MCF 10A (cell line): ENCODE measurements at regions of chr16 and their contacts with region 1.

Region 1: DNA sequence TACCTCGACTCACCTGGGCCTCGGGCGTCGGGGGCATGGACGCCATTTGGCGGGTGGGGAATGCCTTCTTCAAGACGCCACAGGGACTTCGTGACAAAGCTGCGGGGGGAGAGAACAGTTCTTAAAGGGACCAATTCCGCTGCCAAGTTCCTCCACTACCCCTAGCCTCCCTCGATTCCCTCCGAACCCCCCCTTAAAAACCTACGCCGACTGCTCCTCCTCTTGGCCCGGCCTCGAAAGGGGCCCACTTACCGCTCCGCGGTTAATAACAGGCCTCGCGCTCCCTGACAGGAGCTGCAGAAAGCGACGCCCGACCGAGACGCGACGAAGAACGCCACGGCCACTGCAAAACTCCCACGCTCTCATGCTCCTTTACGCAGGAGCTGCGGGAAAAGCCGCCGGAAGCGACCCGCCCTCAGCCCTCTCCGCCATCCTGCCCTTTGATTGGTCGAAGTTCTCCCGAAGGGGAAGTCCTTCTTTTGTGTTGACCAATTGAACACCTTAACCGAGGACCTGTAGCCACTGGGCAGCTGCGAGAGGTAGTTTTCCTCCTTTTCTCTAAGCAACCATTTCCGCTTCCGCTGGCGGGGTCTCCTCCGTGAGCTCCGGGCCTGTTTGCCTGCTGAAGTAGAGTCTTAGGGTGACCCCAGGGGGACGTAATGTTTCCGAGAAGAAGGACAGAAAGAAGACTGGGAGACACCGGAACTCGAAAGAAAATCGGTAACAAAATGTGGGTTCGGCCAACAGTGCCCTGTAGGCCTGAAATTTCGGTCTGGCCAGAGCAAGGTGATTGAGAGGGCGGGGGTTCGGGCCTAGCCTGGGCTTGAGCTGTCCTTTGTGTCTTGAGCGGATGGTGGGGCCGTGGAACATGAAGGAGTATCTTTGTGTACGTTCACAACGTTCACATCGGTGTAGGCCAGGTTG is at the starts of genes NAA60 and ZNF597:
- DNase-seq: peak; percentile 93
- H3K4me3 Mint-ChIP-seq: peak within 1 kb of the TSS; percentile 87
- H3K27ac Mint-ChIP-seq: peak within 1 kb of the TSS; percentile 96
- H3K4me1 Mint-ChIP-seq: no peaks in the 10 kb centered on the region
- H3K27me3 Mint-ChIP-seq: no peaks in the 10 kb centered on the region
- CTCF ChIP-seq: no peak
- total RNA-seq, gene NAA60: 38.6 and 40.8 TPM in 2 replicates
- total RNA-seq, gene ZNF597: 2.3 and 2.5 TPM in 2 replicates

Region 2: GRCh38 chr16:3431779-3432219 is 11.6 kb before region 1 on chr16:
- CTCF ChIA-PET with region 1: interaction called, 3 read pairs
- POLR2A ChIA-PET with region 1: interaction called, 10 read pairs
- intact Hi-C with region 1: no loop called
- DNase-seq: no peak
- H3K4me3 Mint-ChIP-seq: no peak overlapping the region
- H3K27ac Mint-ChIP-seq: no peak overlapping the region
- H3K4me1 Mint-ChIP-seq: no peaks in the 10 kb centered on the region
- H3K27me3 Mint-ChIP-seq: peaks cover 23% of the 10 kb centered on the region
- CTCF ChIP-seq: no peak

Region 3: DNA sequence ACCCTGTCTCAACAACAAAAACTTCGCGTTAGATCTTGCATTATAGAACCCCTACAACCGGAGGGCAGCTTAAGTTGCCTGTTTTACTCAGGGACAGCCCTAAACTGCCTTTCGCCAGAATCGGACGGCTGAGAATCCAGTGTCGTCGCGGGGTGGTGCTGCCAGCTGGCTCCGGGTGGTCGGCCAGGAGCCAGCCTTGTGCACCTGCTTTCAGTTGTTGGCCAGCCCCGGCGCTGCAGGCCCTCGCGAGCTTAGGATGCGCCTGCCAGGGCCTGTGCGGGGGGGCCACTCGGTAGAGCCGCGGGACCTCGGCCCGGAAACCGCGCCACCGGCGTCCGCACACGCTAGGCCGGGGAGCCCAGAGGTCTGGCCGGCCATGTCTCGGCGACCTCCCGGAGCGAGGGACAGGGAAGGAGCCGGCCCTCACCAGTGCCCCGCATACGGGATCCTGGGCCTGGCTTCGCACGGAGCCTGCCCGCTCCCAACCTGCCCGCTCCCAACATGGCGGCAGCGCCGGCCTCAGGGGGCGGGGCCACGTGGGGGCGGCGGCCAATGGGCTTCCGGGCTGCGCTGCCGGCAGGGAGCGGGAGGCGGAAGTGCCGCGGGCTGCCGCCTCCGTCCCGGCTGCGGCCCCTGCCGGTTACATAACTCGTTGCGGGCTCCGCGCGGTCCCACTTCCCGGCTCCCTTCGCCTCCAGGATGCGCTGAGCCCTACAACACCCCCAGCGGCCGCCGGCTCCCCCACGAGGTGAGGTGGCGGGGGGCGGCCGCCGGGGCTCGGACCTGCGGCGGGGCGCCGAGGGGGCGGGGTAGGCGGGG is 14.3 kb after region 1 on chr16:
- CTCF ChIA-PET with region 1: interaction called, 3 read pairs
- POLR2A ChIA-PET with region 1: interaction called, 31 read pairs
- intact Hi-C with region 1: no loop called
- DNase-seq: peak; percentile 87
- H3K4me3 Mint-ChIP-seq: peak overlapping the region; percentile 84
- H3K27ac Mint-ChIP-seq: peak overlapping the region; percentile 75
- H3K4me1 Mint-ChIP-seq: peaks cover 31% of the 10 kb centered on the region
- H3K27me3 Mint-ChIP-seq: no peaks in the 10 kb centered on the region
- CTCF ChIP-seq: peak; percentile 34